WTC11 (cell line): ENCODE measurements at regions of chr5 and their contacts with region 1.

Region 1: GRCh38 chr5:160418561-160419457 is at the start of gene SLU7:
- DNase-seq: peak; percentile 94
- ATAC-seq: peak; percentile 80
- H3K4me3 Mint-ChIP-seq: peak within 1 kb of the TSS; percentile 98
- H3K27ac Mint-ChIP-seq: peak within 1 kb of the TSS; percentile 96
- H3K4me1 Mint-ChIP-seq: peaks cover 42% of the 10 kb centered on the region
- H3K27me3 Mint-ChIP-seq: no peaks in the 10 kb centered on the region
- CTCF ChIP-seq: no peak
- total RNA-seq, gene SLU7: 28.7 to 33.3 TPM (median 32.5 TPM) in 3 replicates

Region 2: DNA sequence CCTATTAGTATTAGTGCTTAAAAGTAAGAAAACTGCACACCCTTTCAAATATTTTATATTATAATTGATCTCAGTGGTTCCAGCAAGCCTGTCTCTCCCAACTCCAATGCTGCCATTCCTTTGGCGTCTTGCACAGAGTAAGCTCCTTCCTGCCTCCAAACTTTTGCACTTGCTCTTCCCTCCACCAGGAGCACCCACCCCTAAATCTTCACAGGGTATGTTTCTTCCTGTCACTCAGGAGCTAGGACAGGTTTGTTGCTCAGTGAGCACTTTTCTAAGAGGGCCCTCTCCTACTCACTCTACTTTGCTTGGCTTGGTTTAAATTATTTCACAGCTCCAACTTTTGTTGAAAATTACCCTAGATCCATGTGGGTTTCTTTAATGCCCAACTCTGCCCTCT is 691.6 kb before region 1 on chr5:
- CTCF ChIA-PET with region 1: no interaction called
- POLR2A ChIA-PET with region 1: interaction called, 10 read pairs
- DNase-seq: no peak
- ATAC-seq: peak; percentile 89
- H3K4me3 Mint-ChIP-seq: no peak overlapping the region
- H3K27ac Mint-ChIP-seq: no peak overlapping the region
- H3K4me1 Mint-ChIP-seq: peaks cover 13% of the 10 kb centered on the region
- H3K27me3 Mint-ChIP-seq: no peaks in the 10 kb centered on the region
- CTCF ChIP-seq: no peak